WTC11 (cell line): ENCODE measurements at regions of chr20 and their contacts with region 1.

Region 1: DNA sequence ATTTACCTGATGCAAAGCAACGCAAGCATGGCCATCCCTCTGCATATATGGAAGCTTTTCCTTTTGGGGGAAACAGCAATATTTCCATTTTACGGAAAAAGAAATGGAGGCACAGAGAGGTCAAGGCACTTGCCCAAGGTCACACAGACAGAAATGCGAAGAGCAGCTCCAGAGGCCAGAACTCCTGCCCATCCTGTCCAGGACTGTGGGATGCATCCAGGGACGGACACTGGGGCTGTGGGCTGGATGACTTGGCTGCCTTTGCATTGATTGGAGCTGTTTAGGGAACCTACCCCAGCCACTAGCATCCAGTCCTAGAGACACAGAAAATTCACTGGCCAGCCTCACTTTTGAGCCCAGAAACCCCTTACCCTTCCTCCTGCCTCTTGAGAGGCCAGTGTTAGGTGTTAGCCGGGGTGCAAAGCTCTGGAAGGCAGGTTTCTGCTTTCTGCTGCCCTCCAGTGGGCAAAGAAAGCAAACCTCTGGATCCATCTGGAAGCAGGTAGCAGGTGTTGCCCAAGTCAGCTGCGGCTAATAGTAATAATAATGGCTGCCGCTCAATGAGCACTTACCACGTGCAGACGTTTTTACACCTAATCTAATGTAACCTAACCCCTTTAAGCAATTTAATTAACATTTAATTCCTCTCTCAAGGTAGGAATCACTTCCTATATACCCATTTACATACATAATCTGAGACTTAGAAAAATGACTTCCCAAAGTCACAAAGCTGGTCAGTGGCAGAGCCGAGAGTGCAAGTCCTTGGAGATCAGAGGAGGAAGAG is 31.7 kb upstream of the CCN5 start:
- DNase-seq: peak; percentile 85
- ATAC-seq: peak; percentile 81
- H3K4me3 Mint-ChIP-seq: no peak overlapping the region
- H3K27ac Mint-ChIP-seq: no peak overlapping the region
- H3K4me1 Mint-ChIP-seq: peaks cover 23% of the 10 kb centered on the region
- H3K27me3 Mint-ChIP-seq: peaks cover 10% of the 10 kb centered on the region
- CTCF ChIP-seq: peak; percentile 60

Region 2: DNA sequence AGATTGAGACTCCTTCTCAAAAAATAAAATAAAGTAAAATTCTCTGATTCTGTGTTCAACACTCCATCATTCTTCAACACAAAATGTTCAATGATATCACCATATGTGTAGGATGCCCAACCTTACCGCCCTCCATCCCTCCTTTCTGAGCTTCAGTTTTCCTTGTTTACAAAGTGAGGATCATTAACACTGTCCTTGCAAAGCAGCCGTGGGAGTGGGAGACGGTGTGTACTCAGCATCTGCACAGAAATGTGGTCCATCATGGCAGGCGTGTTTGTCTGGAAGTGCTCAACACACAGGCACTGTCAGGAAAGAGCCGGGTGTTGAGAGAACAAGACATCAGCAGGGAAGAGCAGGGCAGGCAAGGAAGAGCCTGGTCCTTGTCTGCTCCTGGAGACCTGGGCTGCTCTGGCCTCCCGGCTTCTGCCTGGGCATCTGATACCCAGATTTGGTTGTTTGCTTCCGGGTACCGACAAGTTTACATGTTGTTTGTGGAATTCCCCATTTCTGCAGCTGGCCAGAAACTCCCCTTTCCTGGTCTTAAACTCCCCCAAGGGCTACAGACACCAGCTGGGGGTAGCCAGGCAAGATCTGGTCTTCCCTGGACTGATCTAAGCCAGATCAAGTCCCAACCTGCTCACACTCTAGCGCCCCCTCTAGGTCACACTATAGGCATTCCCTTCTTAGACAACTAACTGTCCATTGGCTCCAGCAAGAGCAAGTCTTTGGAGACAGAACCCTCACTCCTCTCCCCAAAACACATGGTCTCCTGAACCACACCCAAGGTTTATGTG is 234.5 kb before region 1 on chr20:
- CTCF ChIA-PET with region 1: no interaction called
- POLR2A ChIA-PET with region 1: no interaction called
- DNase-seq: peak; percentile 79
- ATAC-seq: peak; percentile 94
- H3K4me3 Mint-ChIP-seq: no peak overlapping the region
- H3K27ac Mint-ChIP-seq: peak overlapping the region; percentile 27; the same call in 1 of the 2 replicates
- H3K4me1 Mint-ChIP-seq: no peaks in the 10 kb centered on the region
- H3K27me3 Mint-ChIP-seq: no peaks in the 10 kb centered on the region; the same call in 1 of the 2 replicates
- CTCF ChIP-seq: peak; percentile 73

Region 3: GRCh38 chr20:44618318-44618731 is 65.1 kb before region 1 on chr20:
- CTCF ChIA-PET with region 1: interaction called, 13 read pairs
- POLR2A ChIA-PET with region 1: no interaction called
- DNase-seq: no peak
- ATAC-seq: no peak
- H3K4me3 Mint-ChIP-seq: no peak overlapping the region
- H3K27ac Mint-ChIP-seq: no peak overlapping the region
- H3K4me1 Mint-ChIP-seq: peaks cover 36% of the 10 kb centered on the region
- H3K27me3 Mint-ChIP-seq: peaks cover 95% of the 10 kb centered on the region
- CTCF ChIP-seq: no peak

Region 4: DNA sequence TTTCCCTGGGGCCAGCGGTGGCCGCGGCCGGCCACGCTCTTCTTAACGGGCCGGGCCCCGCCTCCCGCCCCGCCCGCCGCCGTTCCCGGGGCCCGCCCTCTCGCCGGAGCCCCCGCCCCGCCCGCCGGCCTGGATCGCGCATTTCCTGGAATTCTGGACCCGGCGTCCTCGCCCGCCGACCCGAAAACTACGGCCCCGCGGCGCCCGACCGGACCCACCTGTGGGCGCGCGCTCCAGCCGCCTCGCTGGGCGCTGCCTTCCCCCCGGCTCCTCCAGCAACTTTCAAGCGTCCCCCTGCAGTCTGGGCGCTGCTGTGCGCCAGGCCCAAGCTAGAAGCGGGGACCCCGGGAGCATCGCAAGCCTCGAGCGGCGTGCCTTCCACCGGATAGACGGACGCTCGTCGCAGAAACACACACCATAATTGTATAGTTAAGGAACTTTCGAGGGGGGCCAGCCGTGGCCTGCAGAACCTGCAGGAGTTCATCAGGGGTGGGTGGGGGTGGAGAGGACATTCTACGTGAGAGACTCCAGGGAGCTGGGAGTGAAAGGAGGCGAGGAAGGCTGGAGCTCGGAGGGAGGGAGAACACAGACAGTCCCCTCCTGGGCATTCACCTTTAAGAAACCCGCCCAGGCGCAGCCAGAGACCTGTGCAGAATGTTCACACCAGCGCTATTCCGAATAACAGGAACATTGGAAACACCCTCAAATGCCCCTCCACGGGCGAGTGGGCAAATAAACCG is 31.6 kb before region 1 on chr20 and contains the start of gene ADA:
- CTCF ChIA-PET with region 1: interaction called, 72 read pairs
- POLR2A ChIA-PET with region 1: no interaction called
- DNase-seq: peak; percentile 59
- ATAC-seq: peak; percentile 54
- H3K4me3 Mint-ChIP-seq: peak within 1 kb of the TSS; percentile 83
- H3K27ac Mint-ChIP-seq: no peak within 1 kb of the TSS
- H3K4me1 Mint-ChIP-seq: peaks cover 52% of the 10 kb centered on the region
- H3K27me3 Mint-ChIP-seq: peaks cover 45% of the 10 kb centered on the region
- CTCF ChIP-seq: no peak
- total RNA-seq, gene ADA: 19.7 to 29.2 TPM (median 25.3 TPM) in 3 replicates

Region 5: GRCh38 chr20:44717986-44718385 is 34.5 kb after region 1 on chr20:
- CTCF ChIA-PET with region 1: interaction called, 26 read pairs
- POLR2A ChIA-PET with region 1: interaction called, 3 read pairs
- DNase-seq: peak; percentile 68
- ATAC-seq: peak; percentile 86
- H3K4me3 Mint-ChIP-seq: no peak overlapping the region
- H3K27ac Mint-ChIP-seq: no peak overlapping the region
- H3K4me1 Mint-ChIP-seq: no peaks in the 10 kb centered on the region
- H3K27me3 Mint-ChIP-seq: no peaks in the 10 kb centered on the region
- CTCF ChIP-seq: 0 out of 2 replicates have a peak, but pooled peaks have one; percentile 22

Region 6: GRCh38 chr20:44733341-44734069 is 50.0 kb after region 1 on chr20:
- CTCF ChIA-PET with region 1: interaction called, 83 read pairs
- POLR2A ChIA-PET with region 1: no interaction called
- DNase-seq: peak; percentile 84
- ATAC-seq: peak; percentile 43
- H3K4me3 Mint-ChIP-seq: no peak overlapping the region
- H3K27ac Mint-ChIP-seq: no peak overlapping the region
- H3K4me1 Mint-ChIP-seq: peaks cover 42% of the 10 kb centered on the region
- H3K27me3 Mint-ChIP-seq: no peaks in the 10 kb centered on the region; the same call in 1 of the 2 replicates
- CTCF ChIP-seq: peak; percentile 77